ENCODE measurements at regions of chr19 and their contacts with region 1.

Region 1: GRCh38 chr19:53132141-53132991 is at the start of gene ZNF415:
- DNase-seq: peak; percentile 87 to 89
- ATAC-seq: peak; percentile 81 to 94 (median 90)
- H3K4me3 ChIP-seq: peak within 1 kb of the TSS; percentile 78
- H3K27ac ChIP-seq: peak within 1 kb of the TSS; percentile 88
- H3K4me1 ChIP-seq: peaks cover 5% of the 10 kb centered on the region
- H3K27me3 ChIP-seq: no peaks in the 10 kb centered on the region
- CTCF ChIP-seq: no peak
- total RNA-seq, gene ZNF415: 3.9 to 9.2 (median 6.3) TPM

Region 2: GRCh38 chr19:53158119-53158656 is 25.8 kb after region 1 on chr19:
- intact Hi-C with region 1: loop called in 1 of 2 experiments (anchors 2 kb)
- DNase-seq: peak; percentile 38 to 63
- ATAC-seq: peak; percentile 30 to 50 (median 41)
- H3K4me3 ChIP-seq: peak overlapping the region; percentile 78
- H3K27ac ChIP-seq: peak overlapping the region; percentile 70
- H3K4me1 ChIP-seq: no peaks in the 10 kb centered on the region
- H3K27me3 ChIP-seq: no peaks in the 10 kb centered on the region
- CTCF ChIP-seq: no peak

Measured in psoas muscle (tissue), 8 donors.